ENCODE measurements at regions of chr1 and their contacts with region 1.

Region 1: DNA sequence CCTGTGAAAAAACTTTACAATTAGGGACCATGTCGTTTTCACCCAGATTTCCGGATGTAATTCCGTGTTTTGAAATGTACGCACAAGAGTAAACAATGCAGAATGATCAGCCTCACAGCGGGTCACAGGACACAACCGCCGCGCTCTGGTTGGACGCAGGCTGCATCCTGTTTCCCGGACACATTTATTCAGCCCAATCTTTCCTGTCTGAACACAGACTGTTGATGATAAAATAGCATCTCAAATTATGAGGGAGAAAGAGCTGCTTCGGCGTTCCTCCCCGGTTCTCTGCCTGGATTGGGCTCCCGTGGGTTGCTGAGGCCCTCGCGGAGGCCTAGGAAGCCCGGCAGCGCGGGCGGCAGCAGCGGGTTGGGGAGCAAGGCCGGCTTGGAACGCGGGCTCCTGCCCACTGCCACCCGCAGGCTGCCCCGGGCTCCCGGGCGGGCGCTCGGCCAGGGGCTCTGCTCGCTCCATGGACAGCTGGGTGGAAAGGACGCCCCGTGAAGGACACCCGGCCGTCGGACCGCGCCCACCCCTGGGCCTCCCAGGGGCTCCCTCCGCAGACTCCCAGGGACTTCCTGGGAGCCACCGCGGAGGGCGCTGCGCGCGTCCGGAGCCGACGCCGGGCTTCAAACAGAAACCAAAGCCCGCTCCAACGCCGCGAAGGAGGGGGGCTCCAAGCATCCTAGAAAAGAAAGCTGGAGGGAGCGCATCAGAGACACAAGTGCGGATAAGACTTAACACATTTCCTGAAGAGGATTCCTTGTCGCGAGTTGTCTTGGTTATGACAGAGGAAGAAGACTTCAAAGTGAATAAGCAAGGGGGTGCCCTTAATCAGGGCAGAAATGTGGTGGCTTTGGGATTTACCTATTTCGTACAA is 122.3 kb downstream of the ESRRG start:
- DNase-seq: peak; percentile 70 to 75
- ATAC-seq: peak; percentile 94 to 96
- H3K4me3 ChIP-seq: peak overlapping the region; percentile 67 to 88 (median 86)
- H3K27ac ChIP-seq: peak overlapping the region; percentile 90 to 98 (median 94)
- H3K4me1 ChIP-seq: peaks cover 9 to 13% of the 10 kb centered on the region in 2 donors
- H3K27me3 ChIP-seq: no peaks in the 10 kb centered on the region
- CTCF ChIP-seq: peak in 4 of 5 experiments; percentile 46 to 70 (median 57)
- POLR2A ChIP-seq: peak; percentile 38 to 74

Region 2: GRCh38 chr1:216626394-216627067 is 25.6 kb after region 1 on chr1:
- in situ Hi-C with region 1: no loop called
- intact Hi-C with region 1: loop called (anchors 2 kb)
- DNase-seq: peak; percentile 11 to 37
- ATAC-seq: peak; percentile 91 to 95
- H3K4me3 ChIP-seq: peak overlapping the region in 2 of 4 donors; percentile 14 to 16
- H3K27ac ChIP-seq: peak overlapping the region; percentile 72 to 82 (median 75)
- H3K4me1 ChIP-seq: peaks cover 12 to 22% of the 10 kb centered on the region in 2 donors
- H3K27me3 ChIP-seq: no peaks in the 10 kb centered on the region
- CTCF ChIP-seq: no peak
- POLR2A ChIP-seq: no peak

Region 3: DNA sequence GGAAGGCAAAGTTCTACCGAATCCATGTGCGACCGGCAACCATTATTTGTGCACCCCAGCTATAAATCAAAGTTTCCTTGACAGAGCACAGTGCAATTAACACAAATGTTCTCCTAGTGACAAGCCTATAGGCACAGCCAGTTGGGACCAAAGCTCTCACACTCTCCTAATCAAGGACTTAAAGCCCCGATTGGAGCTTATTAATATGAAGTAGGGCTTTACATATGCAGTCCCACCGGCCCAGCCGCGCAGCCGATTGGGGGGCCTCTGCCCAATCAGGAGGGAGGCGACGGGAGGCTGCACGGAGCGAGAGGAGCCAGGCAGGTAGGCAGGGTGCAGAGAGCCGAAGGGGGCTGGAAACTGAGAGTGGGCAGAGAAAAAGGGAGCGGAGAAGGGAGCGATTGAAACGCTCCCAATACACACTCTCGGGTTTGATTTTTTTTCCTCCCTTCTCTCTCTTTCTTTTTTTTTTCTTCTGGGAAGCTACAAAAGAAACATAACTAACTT is 122.4 kb after region 1 on chr1 and contains the start of gene ESRRG:
- in situ Hi-C with region 1: no loop called
- intact Hi-C with region 1: loop called (anchors 1 kb)
- DNase-seq: peak; percentile 62 to 74
- ATAC-seq: peak; percentile 72 to 73
- H3K4me3 ChIP-seq: peak within 1 kb of the TSS; percentile 54 to 65 (median 59)
- H3K27ac ChIP-seq: peak within 1 kb of the TSS; percentile 70 to 87 (median 80)
- H3K4me1 ChIP-seq: peaks cover 16 to 21% of the 10 kb centered on the region in 2 donors
- H3K27me3 ChIP-seq: no peaks in the 10 kb centered on the region
- CTCF ChIP-seq: no peak
- POLR2A ChIP-seq: peak; percentile 40 to 79
- total RNA-seq, gene ESRRG: 1.8 to 18.7 (median 2.4) TPM

Measured in gastrocnemius medialis (tissue), 4 donors.